Activated B cell treated with CpG ODN at 0.5 μM for 24 hours (primary cell): ENCODE measurements at regions of chr3 and their contacts with region 1.

Region 1: GRCh38 chr3:13022348-13023234 is 50.6 kb downstream of the IQSEC1 start:
- DNase-seq: peak; percentile 70
- ATAC-seq: peak; percentile 57
- H3K4me3 Mint-ChIP-seq: peak overlapping the region; percentile 100
- H3K27ac Mint-ChIP-seq: peak overlapping the region; percentile 94
- H3K4me1 Mint-ChIP-seq: peaks cover 81% of the 10 kb centered on the region
- H3K27me3 Mint-ChIP-seq: no peaks in the 10 kb centered on the region
- CTCF ChIP-seq: no peak

Region 2: DNA sequence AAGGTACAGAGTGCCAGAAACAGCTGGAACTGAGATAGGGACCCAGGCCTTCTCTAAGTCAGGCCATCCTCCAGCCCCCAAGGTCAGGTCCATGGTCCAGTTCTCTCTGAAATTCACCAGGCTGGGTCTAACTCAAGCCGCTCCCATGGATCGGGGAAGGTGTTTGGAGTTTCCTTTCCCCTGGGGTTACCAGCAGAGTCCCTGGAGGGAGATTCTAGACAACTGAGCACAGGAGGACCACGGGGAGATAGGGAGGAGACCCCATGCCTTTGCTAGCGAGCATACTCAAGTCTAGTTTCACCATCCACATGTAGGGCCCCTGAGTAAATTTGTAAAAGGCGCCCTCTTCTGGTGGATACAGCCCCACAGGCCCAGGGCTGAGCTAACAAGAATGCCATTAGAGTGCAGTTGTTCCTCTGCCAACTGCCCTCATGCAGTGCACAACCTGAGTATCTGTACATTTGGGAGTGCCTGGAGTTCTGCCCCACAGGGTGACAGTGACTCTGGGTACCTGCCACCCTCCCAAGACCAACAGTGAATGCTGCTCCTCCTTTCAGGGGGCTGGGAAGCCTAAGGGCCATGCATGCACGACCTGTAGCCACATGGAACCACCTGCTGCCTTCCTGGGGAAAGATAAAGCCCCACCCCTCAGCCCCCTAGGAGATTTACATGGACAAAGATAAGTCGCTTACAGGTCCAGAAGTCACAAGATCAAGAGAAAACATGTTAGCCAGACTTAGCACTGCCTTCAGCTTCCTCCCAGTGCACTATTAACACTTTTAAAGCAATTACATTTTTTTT is 38.4 kb before region 1 on chr3:
- CTCF ChIA-PET with region 1: interaction called, 4 read pairs
- POLR2A ChIA-PET with region 1: interaction called, 12 read pairs
- intact Hi-C with region 1: loop called (anchors 1 kb)
- DNase-seq: no peak
- ATAC-seq: peak; percentile 51
- H3K4me3 Mint-ChIP-seq: peak overlapping the region; percentile 35
- H3K27ac Mint-ChIP-seq: peak overlapping the region; percentile 56
- H3K4me1 Mint-ChIP-seq: peaks cover 90% of the 10 kb centered on the region
- H3K27me3 Mint-ChIP-seq: no peaks in the 10 kb centered on the region
- CTCF ChIP-seq: no peak

Region 3: DNA sequence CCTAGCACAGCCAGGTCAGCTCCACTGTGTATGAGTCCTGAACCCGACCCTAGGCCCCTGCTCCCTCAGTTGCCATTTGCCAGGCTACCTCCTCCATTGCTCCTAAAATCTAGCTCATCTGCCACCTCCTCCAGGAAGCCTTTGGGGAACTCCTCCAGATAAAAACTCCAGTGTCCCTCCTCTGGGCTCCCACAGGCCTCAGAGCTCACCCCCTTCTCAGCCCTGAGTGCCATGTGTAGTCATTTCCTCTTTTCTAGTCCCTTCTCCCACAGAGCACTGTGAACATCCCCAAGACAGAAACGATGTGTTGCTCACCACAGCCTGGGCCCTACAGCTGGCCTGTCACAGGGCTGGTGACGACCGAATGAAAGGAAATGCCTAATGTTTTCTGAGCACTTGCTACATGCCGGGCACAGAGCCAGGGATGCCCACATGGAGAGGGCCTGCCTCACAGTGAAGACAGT is 10.3 kb before region 1 on chr3:
- CTCF ChIA-PET with region 1: interaction called, 12 read pairs
- POLR2A ChIA-PET with region 1: interaction called, 465 read pairs
- intact Hi-C with region 1: loop called (anchors 1 kb)
- DNase-seq: no peak
- ATAC-seq: peak; percentile 36
- H3K4me3 Mint-ChIP-seq: peak overlapping the region; percentile 87
- H3K27ac Mint-ChIP-seq: peak overlapping the region; percentile 95
- H3K4me1 Mint-ChIP-seq: peaks cover 98% of the 10 kb centered on the region
- H3K27me3 Mint-ChIP-seq: no peaks in the 10 kb centered on the region
- CTCF ChIP-seq: no peak

Region 4: DNA sequence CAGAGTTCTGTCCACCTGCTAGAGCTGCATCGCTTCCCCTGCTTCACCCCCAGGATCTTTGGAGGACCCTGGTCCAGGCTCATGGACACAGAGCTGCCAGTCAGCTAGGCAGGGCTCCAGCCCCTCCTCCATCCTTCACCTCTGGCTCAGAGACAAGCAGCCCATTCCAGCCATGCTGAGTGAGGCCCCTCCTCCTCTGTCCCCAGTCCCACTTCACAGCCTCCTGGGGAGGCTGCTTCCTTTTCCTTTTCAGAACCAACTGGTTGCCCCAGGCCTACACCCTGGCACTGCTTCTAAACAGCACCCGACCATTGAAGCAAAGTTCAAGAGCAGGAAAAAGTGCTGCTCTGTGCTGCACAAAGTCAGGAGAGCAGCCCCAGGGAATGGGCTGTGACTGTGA is 28.5 kb after region 1 on chr3:
- CTCF ChIA-PET with region 1: interaction called, 10 read pairs
- POLR2A ChIA-PET with region 1: interaction called, 170 read pairs
- intact Hi-C with region 1: loop called (anchors 1 kb)
- DNase-seq: no peak
- ATAC-seq: no peak
- H3K4me3 Mint-ChIP-seq: no peak overlapping the region
- H3K27ac Mint-ChIP-seq: no peak overlapping the region
- H3K4me1 Mint-ChIP-seq: peaks cover 60% of the 10 kb centered on the region
- H3K27me3 Mint-ChIP-seq: no peaks in the 10 kb centered on the region
- CTCF ChIP-seq: no peak

Region 5: GRCh38 chr3:13091898-13092611 is 69.5 kb after region 1 on chr3:
- CTCF ChIA-PET with region 1: interaction called, 5 read pairs
- POLR2A ChIA-PET with region 1: interaction called, 291 read pairs
- intact Hi-C with region 1: no loop called
- DNase-seq: peak; percentile 80
- ATAC-seq: peak; percentile 49
- H3K4me3 Mint-ChIP-seq: no peak overlapping the region
- H3K27ac Mint-ChIP-seq: peak overlapping the region; percentile 35
- H3K4me1 Mint-ChIP-seq: peaks cover 71% of the 10 kb centered on the region
- H3K27me3 Mint-ChIP-seq: peaks cover 10% of the 10 kb centered on the region
- CTCF ChIP-seq: peak; percentile 33

Region 6: GRCh38 chr3:13414040-13414729 is 391.6 kb after region 1 on chr3:
- CTCF ChIA-PET with region 1: no interaction called
- POLR2A ChIA-PET with region 1: interaction called, 13 read pairs
- intact Hi-C with region 1: no loop called
- DNase-seq: peak; percentile 76
- ATAC-seq: peak; percentile 93
- H3K4me3 Mint-ChIP-seq: peak overlapping the region; percentile 79
- H3K27ac Mint-ChIP-seq: peak overlapping the region; percentile 98
- H3K4me1 Mint-ChIP-seq: peaks cover 67% of the 10 kb centered on the region
- H3K27me3 Mint-ChIP-seq: no peaks in the 10 kb centered on the region
- CTCF ChIP-seq: no peak